Left ventricle myocardium superior (tissue), 1 donor: ENCODE measurements at regions of chr11 and their contacts with region 1.

Region 1: GRCh38 chr11:118488480-118489109 is 38.7 kb upstream of the TTC36 start:
- DNase-seq: peak; percentile 43
- ATAC-seq: peak; percentile 65

Region 2: DNA sequence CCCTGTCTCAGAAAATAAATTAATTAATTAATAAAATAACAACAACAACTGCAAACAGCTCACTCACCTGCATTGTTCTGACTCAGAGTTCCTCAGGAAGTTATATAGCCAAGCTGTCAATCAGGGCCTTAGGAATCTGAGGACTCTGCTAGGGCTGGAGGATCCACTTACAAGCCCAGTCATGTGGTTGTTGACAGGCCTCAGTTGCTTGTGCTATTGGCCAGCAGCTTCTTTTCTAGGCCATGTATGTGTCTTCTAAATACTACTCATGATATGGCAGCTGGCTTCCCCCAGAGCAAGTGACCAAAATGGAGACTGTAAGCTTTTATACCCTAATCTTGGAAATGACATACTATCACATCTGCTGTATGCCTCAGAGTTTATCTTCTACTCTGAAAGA is 108.0 kb before region 1 on chr11:
- intact Hi-C with region 1: loop called (anchors 5 kb)
- DNase-seq: no peak
- ATAC-seq: peak; percentile 48

Region 3: GRCh38 chr11:118398791-118399559 is 89.6 kb before region 1 on chr11:
- intact Hi-C with region 1: loop called (anchors 5 kb)
- DNase-seq: no peak
- ATAC-seq: no peak